ENCODE measurements at regions of chr21 and their contacts with region 1.

Region 1: GRCh38 chr21:31218830-31219608 is 125.0 kb downstream of the TIAM1 start:
- DNase-seq: peak; percentile 97
- ATAC-seq: peak; percentile 87
- H3K4me3 ChIP-seq: peak overlapping the region; percentile 57
- H3K27ac ChIP-seq: peak overlapping the region; percentile 90
- H3K4me1 ChIP-seq: peaks cover 40% of the 10 kb centered on the region
- H3K27me3 ChIP-seq: no peaks in the 10 kb centered on the region
- CTCF ChIP-seq: no peak

Region 2: DNA sequence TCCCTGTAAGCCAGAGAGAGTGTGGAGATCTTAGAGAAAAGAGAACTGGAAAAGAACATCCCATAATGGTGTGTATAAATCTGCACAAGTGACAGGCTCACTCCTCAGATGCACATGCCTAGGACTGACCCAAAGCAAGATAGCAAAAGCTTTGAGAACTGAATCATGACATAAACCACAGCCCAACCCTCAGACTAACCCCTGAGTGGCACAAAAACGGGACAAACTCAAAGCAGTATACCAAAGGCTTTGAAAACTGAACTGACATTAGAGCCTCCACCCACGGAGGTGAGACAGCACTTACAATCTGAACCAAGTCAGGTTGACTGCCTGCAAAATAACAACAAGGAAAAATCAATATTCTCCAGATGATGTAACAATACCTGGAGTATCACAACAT is 54.3 kb after region 1 on chr21:
- CTCF ChIA-PET with region 1: no interaction called
- POLR2A ChIA-PET with region 1: no interaction called
- intact Hi-C with region 1: loop called (anchors 2 kb)
- DNase-seq: no peak
- ATAC-seq: peak; percentile 64
- H3K4me3 ChIP-seq: no peak overlapping the region
- H3K27ac ChIP-seq: no peak overlapping the region
- H3K4me1 ChIP-seq: peaks cover 14% of the 10 kb centered on the region
- H3K27me3 ChIP-seq: no peaks in the 10 kb centered on the region
- CTCF ChIP-seq: no peak

Region 3: DNA sequence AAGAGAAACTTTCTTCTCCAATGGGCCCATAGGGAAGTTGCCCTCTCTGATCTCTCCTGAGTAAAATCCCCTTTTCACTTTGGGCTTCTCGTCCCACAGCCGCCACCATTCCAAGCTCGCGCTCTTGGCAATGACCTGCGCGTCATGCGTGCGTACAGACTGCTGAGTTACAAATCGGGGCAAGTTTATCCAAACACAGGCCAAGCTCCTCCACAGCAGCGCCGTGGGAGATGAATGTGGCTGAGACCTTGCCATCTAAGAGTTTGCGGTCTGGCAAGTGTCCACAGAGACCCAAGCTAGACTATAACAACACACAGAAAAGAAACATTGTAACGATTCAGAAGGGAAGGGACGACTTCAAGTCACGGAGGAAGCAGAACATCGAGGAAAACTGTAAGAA is 324.2 kb after region 1 on chr21:
- CTCF ChIA-PET with region 1: interaction called, 18 read pairs
- POLR2A ChIA-PET with region 1: no interaction called
- intact Hi-C with region 1: no loop called
- DNase-seq: no peak
- ATAC-seq: no peak
- H3K4me3 ChIP-seq: no peak overlapping the region
- H3K27ac ChIP-seq: no peak overlapping the region
- H3K4me1 ChIP-seq: no peaks in the 10 kb centered on the region
- H3K27me3 ChIP-seq: no peaks in the 10 kb centered on the region
- CTCF ChIP-seq: no peak

Measured in PC-3 (cell line).